Activated naive CD4-positive, alpha-beta T cell treated with anti-CD3 and anti-CD28 coated beads for 36 hours (primary cell): ENCODE measurements at regions of chrX and their contacts with region 1.

Region 1: GRCh38 chrX:14029425-14030173 is at the start of gene GEMIN8:
- DNase-seq: peak; percentile 82
- H3K4me3 Mint-ChIP-seq: peak within 1 kb of the TSS; percentile 98
- H3K27ac Mint-ChIP-seq: peak within 1 kb of the TSS; percentile 99
- H3K4me1 Mint-ChIP-seq: peaks cover 30% of the 10 kb centered on the region
- H3K27me3 Mint-ChIP-seq: no peaks in the 10 kb centered on the region
- total RNA-seq, gene GEMIN8: 4.7 to 5.1 TPM

Region 2: GRCh38 chrX:12946838-12947544 is 1082.6 kb before region 1 on chrX:
- CTCF ChIA-PET with region 1: no interaction called
- intact Hi-C with region 1: loop called (anchors 1 kb)
- DNase-seq: peak; percentile 85
- H3K4me3 Mint-ChIP-seq: peak overlapping the region; percentile 41
- H3K27ac Mint-ChIP-seq: peak overlapping the region; percentile 98
- H3K4me1 Mint-ChIP-seq: peaks cover 55% of the 10 kb centered on the region
- H3K27me3 Mint-ChIP-seq: no peaks in the 10 kb centered on the region

Region 3: DNA sequence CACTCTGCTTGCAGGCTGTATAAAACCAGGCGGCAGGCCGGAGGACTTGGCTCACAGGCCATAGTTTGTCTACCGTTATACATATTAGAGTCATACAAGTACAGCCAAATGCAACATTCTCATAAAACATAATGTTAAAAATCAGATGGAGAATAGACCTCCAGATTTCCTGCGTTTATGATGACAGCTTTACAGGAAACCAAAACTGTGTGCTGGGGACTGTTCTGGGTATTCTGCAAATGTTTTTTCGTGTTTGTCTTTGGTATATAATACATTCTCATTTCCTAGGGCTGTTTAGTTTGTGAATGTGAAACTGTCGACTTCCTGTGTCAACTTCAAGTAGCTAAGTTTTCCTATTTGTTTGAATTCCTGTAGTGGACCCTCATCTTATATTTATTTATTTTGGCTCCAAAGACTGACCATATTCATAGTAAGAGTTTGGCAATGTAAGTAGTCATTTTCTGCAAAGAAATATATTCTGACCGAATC is 905.7 kb before region 1 on chrX:
- CTCF ChIA-PET with region 1: no interaction called
- intact Hi-C with region 1: no loop called
- DNase-seq: peak; percentile 6
- H3K4me3 Mint-ChIP-seq: peak overlapping the region; percentile 39
- H3K27ac Mint-ChIP-seq: peak overlapping the region; percentile 70
- H3K4me1 Mint-ChIP-seq: peaks cover 49% of the 10 kb centered on the region
- H3K27me3 Mint-ChIP-seq: no peaks in the 10 kb centered on the region

Region 4: GRCh38 chrX:13167481-13168231 is 861.9 kb before region 1 on chrX:
- CTCF ChIA-PET with region 1: no interaction called
- intact Hi-C with region 1: loop called (anchors 10 kb)
- DNase-seq: peak; percentile 37
- H3K4me3 Mint-ChIP-seq: peak overlapping the region; percentile 45
- H3K27ac Mint-ChIP-seq: peak overlapping the region; percentile 82
- H3K4me1 Mint-ChIP-seq: peaks cover 18% of the 10 kb centered on the region
- H3K27me3 Mint-ChIP-seq: no peaks in the 10 kb centered on the region

Region 5: GRCh38 chrX:13658602-13659001 is 371.0 kb before region 1 on chrX:
- CTCF ChIA-PET with region 1: interaction called, 6 read pairs
- intact Hi-C with region 1: loop called (anchors 1 kb)
- DNase-seq: no peak
- H3K4me3 Mint-ChIP-seq: no peak overlapping the region
- H3K27ac Mint-ChIP-seq: no peak overlapping the region
- H3K4me1 Mint-ChIP-seq: peaks cover 32% of the 10 kb centered on the region
- H3K27me3 Mint-ChIP-seq: no peaks in the 10 kb centered on the region

Region 6: GRCh38 chrX:13742397-13743176 is 287.0 kb before region 1 on chrX:
- CTCF ChIA-PET with region 1: no interaction called
- intact Hi-C with region 1: loop called (anchors 1 kb)
- DNase-seq: peak; percentile 75
- H3K4me3 Mint-ChIP-seq: peak overlapping the region; percentile 58
- H3K27ac Mint-ChIP-seq: peak overlapping the region; percentile 85
- H3K4me1 Mint-ChIP-seq: peaks cover 31% of the 10 kb centered on the region
- H3K27me3 Mint-ChIP-seq: no peaks in the 10 kb centered on the region

Region 7: DNA sequence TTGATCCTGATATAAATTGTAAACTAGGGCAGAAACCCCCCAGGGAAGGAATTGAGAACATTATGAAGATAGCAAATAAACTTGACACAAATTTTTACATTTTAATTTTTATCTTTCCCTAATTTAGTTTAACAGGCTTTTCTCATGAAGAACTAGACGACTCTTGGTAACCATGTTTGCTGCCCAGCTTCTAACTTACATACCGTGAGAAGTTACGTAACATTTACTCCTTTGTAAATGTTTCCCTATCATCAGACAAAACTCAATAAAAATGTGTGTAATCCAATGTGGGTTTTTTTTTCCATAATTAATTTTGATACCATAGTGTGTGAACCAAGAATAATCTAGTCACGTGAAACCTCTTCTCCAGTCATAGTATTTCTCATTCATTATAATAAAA is 260.7 kb before region 1 on chrX:
- CTCF ChIA-PET with region 1: no interaction called
- intact Hi-C with region 1: no loop called
- DNase-seq: no peak
- H3K4me3 Mint-ChIP-seq: no peak overlapping the region
- H3K27ac Mint-ChIP-seq: no peak overlapping the region
- H3K4me1 Mint-ChIP-seq: peaks cover 4% of the 10 kb centered on the region
- H3K27me3 Mint-ChIP-seq: no peaks in the 10 kb centered on the region

Region 8: GRCh38 chrX:14015294-14015693 is 14.3 kb before region 1 on chrX:
- CTCF ChIA-PET with region 1: interaction called, 4 read pairs
- intact Hi-C with region 1: loop called (anchors 1 kb)
- DNase-seq: no peak
- H3K4me3 Mint-ChIP-seq: no peak overlapping the region
- H3K27ac Mint-ChIP-seq: no peak overlapping the region
- H3K4me1 Mint-ChIP-seq: peaks cover 17% of the 10 kb centered on the region
- H3K27me3 Mint-ChIP-seq: no peaks in the 10 kb centered on the region

Region 9: GRCh38 chrX:15202454-15203143 is 1173.0 kb after region 1 on chrX:
- CTCF ChIA-PET with region 1: no interaction called
- intact Hi-C with region 1: loop called (anchors 1 kb)
- DNase-seq: no peak
- H3K4me3 Mint-ChIP-seq: no peak overlapping the region
- H3K27ac Mint-ChIP-seq: no peak overlapping the region
- H3K4me1 Mint-ChIP-seq: peaks cover 37% of the 10 kb centered on the region
- H3K27me3 Mint-ChIP-seq: no peaks in the 10 kb centered on the region